Calu3 (cell line): ENCODE measurements at regions of chr10 and their contacts with region 1.

Region 1: DNA sequence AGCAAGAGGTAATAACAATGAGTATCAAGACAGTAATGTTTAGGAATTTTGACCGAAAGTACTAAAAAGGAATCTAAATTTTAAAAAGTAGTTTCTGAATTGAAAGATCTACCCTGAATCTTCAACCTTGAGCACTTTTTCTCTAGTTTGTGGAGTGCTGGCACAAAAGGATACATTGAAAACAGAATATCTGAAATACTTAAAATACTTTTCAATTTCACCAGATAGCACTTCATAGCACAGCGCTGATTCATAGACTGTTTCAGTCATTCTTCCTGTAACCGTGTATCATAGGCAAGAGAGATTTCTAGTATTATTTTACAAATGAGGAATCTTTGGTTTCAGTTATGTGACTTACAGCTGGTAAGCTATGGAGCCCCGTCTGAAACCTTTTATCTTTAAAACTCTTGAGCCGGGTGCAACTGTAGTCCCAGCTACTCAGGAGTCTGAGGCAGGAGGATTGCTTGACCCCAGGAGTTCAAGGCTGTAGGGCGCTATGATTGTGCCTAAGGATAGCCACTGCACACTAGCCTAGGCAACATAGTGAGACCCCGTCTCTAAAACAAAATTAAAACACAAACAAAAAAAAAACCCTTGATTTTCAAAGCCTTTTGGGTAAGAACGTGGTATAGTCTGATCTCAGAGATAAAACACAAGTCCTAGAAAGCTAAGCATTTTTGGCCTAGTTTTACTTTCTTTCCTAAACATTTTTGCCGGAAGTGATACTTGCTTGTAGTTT is 35.1 kb downstream of the FHIP2A start:
- DNase-seq: no peak
- H3K4me3 Mint-ChIP-seq: no peak overlapping the region
- H3K27ac Mint-ChIP-seq: peak overlapping the region; percentile 52
- H3K4me1 Mint-ChIP-seq: peaks cover 10% of the 10 kb centered on the region
- H3K27me3 Mint-ChIP-seq: no peaks in the 10 kb centered on the region
- CTCF ChIP-seq: no peak

Region 2: DNA sequence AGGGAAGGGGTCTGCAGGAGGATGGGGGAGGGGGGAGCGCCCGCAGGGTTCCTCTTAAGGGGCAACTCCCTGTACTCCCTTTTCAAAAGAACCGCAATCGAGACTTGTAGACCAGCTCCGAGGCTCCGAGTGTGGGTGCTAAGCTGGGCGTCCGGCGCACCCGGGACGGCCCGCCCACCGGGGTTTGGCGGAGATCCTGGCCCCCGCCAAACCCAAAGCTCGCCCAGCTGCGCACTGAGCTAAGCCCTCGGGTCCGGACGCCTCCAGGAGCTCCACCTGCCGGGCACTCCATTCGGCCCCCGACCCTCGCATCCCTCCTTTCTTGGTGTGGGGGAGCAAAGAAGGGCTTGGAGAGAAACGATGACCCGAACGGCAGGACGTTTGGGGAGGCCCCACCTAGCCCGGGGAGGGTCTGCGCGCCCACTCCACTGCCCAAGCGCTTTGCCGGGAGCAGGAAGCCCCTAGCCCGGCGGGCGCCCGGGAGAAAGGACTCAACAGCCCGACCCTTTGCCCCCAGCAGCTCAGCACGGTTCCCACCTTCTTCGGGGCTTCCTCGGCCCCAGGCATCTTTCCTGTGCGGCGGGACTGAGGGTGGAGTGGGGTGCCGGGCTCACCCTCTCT is 453.1 kb before region 1 on chr10:
- CTCF ChIA-PET with region 1: no interaction called
- intact Hi-C with region 1: no loop called
- DNase-seq: no peak
- H3K4me3 Mint-ChIP-seq: peak overlapping the region; percentile 79
- H3K27ac Mint-ChIP-seq: no peak overlapping the region
- H3K4me1 Mint-ChIP-seq: peaks cover 23% of the 10 kb centered on the region
- H3K27me3 Mint-ChIP-seq: peaks cover 64% of the 10 kb centered on the region
- CTCF ChIP-seq: no peak

Region 3: GRCh38 chr10:114584419-114584818 is 272.3 kb before region 1 on chr10:
- CTCF ChIA-PET with region 1: no interaction called
- intact Hi-C with region 1: no loop called
- DNase-seq: no peak
- H3K4me3 Mint-ChIP-seq: no peak overlapping the region
- H3K27ac Mint-ChIP-seq: no peak overlapping the region
- H3K4me1 Mint-ChIP-seq: no peaks in the 10 kb centered on the region
- H3K27me3 Mint-ChIP-seq: no peaks in the 10 kb centered on the region
- CTCF ChIP-seq: no peak

Region 4: GRCh38 chr10:114772496-114773196 is 84.1 kb before region 1 on chr10:
- CTCF ChIA-PET with region 1: no interaction called
- intact Hi-C with region 1: no loop called
- DNase-seq: no peak
- H3K4me3 Mint-ChIP-seq: no peak overlapping the region
- H3K27ac Mint-ChIP-seq: no peak overlapping the region
- H3K4me1 Mint-ChIP-seq: peaks cover 5% of the 10 kb centered on the region
- H3K27me3 Mint-ChIP-seq: no peaks in the 10 kb centered on the region
- CTCF ChIP-seq: no peak

Region 5: DNA sequence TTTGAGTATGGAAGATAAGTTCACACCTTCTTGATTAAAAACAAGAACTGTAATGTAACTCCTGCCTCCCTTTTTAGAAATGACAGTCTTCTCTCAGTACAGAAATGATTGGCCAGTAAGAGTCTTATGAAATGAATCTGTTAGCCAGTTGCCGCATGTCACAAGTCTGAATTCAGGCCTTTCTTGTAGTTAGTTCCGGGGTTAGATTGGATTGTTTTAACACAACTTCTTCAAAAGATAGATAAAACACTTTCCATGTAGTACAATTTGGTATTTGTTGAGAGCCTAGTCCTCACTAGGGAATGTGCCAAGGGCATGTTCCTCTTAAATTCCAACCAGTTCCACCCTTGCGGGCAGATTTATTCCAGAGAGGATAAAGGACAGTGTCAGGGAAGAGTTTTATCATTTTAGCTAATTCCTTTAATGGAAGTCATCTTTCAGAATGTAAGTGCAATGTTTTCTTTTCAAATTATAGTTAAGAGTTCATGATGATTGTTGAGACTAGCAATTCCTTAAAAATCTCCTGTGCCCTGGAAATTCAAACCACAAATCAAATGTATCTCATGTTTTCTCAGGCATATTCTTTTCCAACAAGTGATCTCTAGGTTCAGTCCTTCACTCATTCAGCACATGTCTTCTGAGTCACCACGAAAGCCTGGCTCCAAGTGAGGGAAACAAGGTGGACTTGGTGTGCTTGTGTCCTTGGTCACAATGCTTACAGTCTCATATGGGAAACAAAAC is 31.0 kb before region 1 on chr10:
- CTCF ChIA-PET with region 1: no interaction called
- intact Hi-C with region 1: loop called (anchors 2 kb)
- DNase-seq: no peak
- H3K4me3 Mint-ChIP-seq: no peak overlapping the region
- H3K27ac Mint-ChIP-seq: no peak overlapping the region
- H3K4me1 Mint-ChIP-seq: peaks cover 26% of the 10 kb centered on the region
- H3K27me3 Mint-ChIP-seq: no peaks in the 10 kb centered on the region
- CTCF ChIP-seq: no peak